Caco-2 (cell line): ENCODE measurements at regions of chr12 and their contacts with region 1.

Region 1: DNA sequence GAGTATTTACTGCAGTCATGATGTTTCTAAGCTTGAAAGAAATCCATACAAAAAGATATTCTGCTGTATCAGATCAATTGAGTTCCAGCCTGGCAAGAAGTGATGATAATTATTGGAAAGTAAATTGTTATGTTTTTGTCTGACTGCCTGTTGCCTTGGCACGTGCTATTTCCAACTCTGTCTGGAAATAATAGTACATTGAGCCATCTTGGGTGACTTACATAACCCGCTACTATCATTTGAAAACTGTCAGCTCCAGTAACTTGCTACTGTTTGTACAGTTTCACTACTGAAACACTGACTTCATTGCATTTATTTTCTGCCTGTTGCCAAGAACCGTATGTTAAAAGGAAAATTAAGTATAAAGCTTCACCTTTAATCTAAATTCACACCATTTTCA is 318.6 kb downstream of the ITPR2 start:
- DNase-seq: no peak
- H3K4me3 ChIP-seq: no peak overlapping the region
- H3K4me3 Mint-ChIP-seq: no peak overlapping the region
- H3K27ac Mint-ChIP-seq: peak overlapping the region; percentile 96
- H3K4me1 ChIP-seq: peaks cover 51% of the 10 kb centered on the region
- H3K4me1 Mint-ChIP-seq: peaks cover 44% of the 10 kb centered on the region
- H3K27me3 ChIP-seq: no peaks in the 10 kb centered on the region
- H3K27me3 Mint-ChIP-seq: no peaks in the 10 kb centered on the region
- CTCF ChIP-seq: no peak

Region 2: GRCh38 chr12:26091822-26092221 is 422.5 kb before region 1 on chr12:
- CTCF ChIA-PET with region 1: no interaction called
- POLR2A ChIA-PET with region 1: interaction called, 3 read pairs
- intact Hi-C with region 1: loop called (anchors 1 kb)
- DNase-seq: peak in 1 of 2 experiments; percentile 42
- H3K4me3 ChIP-seq: no peak overlapping the region
- H3K4me3 Mint-ChIP-seq: peak overlapping the region; percentile 7
- H3K27ac Mint-ChIP-seq: peak overlapping the region; percentile 84
- H3K4me1 ChIP-seq: peaks cover 61% of the 10 kb centered on the region
- H3K4me1 Mint-ChIP-seq: peaks cover 45% of the 10 kb centered on the region
- H3K27me3 ChIP-seq: no peaks in the 10 kb centered on the region
- H3K27me3 Mint-ChIP-seq: no peaks in the 10 kb centered on the region
- CTCF ChIP-seq: peak; percentile 30 to 34

Region 3: GRCh38 chr12:26113853-26114719 is 400.3 kb before region 1 on chr12:
- CTCF ChIA-PET with region 1: no interaction called
- POLR2A ChIA-PET with region 1: no interaction called
- intact Hi-C with region 1: loop called (anchors 1 kb)
- DNase-seq: peak; percentile 98
- H3K4me3 ChIP-seq: peak overlapping the region; percentile 77
- H3K4me3 Mint-ChIP-seq: peak overlapping the region; percentile 78
- H3K27ac Mint-ChIP-seq: peak overlapping the region; percentile 90
- H3K4me1 ChIP-seq: peaks cover 23% of the 10 kb centered on the region
- H3K4me1 Mint-ChIP-seq: peaks cover 18% of the 10 kb centered on the region
- H3K27me3 ChIP-seq: no peaks in the 10 kb centered on the region
- H3K27me3 Mint-ChIP-seq: peaks cover 2% of the 10 kb centered on the region
- CTCF ChIP-seq: peak; percentile 12 to 48

Region 4: DNA sequence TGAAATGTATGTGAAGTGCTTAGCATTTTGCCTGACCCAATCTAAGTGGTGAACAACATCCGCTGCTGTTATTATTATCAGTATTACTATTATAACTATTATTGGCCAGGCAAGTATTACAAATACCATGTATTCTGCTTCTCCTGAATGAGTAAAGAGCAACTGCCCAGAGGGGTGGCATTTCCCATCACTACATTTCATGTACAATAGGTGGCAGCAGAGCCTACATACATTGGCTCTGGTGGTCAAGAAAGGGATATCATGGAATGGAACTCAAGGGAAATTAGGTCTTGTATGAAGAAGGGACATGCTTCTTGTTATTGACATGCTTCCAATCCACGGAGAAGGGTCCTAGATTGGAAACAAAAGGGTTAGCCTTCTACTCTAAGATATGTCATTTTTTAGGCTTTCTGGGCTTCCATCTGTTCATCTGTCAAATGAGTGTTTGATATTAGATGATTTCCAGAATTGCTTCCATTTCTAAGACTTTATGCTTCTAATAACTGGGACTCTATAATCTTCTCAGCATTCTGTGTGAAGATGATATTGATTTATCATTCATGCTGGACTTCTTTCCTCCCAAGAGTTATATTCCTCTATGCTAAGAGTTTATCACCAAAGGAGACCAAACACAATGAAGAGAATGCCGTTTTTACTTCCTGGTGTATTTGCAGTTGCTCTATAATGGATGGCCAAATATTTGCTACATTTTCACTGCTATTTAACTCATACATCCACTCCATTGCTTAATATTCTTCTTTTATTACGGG is 79.9 kb before region 1 on chr12:
- CTCF ChIA-PET with region 1: interaction called, 5 read pairs
- POLR2A ChIA-PET with region 1: no interaction called
- intact Hi-C with region 1: loop called (anchors 1 kb)
- DNase-seq: peak; percentile 72 to 77
- H3K4me3 ChIP-seq: no peak overlapping the region
- H3K4me3 Mint-ChIP-seq: peak overlapping the region; percentile 16
- H3K27ac Mint-ChIP-seq: peak overlapping the region; percentile 45
- H3K4me1 ChIP-seq: peaks cover 27% of the 10 kb centered on the region
- H3K4me1 Mint-ChIP-seq: peaks cover 17% of the 10 kb centered on the region
- H3K27me3 ChIP-seq: no peaks in the 10 kb centered on the region
- H3K27me3 Mint-ChIP-seq: no peaks in the 10 kb centered on the region
- CTCF ChIP-seq: peak; percentile 89 to 97

Region 5: GRCh38 chr12:26629864-26630263 is 115.5 kb after region 1 on chr12:
- CTCF ChIA-PET with region 1: no interaction called
- POLR2A ChIA-PET with region 1: no interaction called
- intact Hi-C with region 1: loop called (anchors 1 kb)
- DNase-seq: no peak
- H3K4me3 ChIP-seq: no peak overlapping the region
- H3K4me3 Mint-ChIP-seq: peak overlapping the region; percentile 14
- H3K27ac Mint-ChIP-seq: peak overlapping the region; percentile 51
- H3K4me1 ChIP-seq: peaks cover 57% of the 10 kb centered on the region
- H3K4me1 Mint-ChIP-seq: peaks cover 55% of the 10 kb centered on the region
- H3K27me3 ChIP-seq: no peaks in the 10 kb centered on the region
- H3K27me3 Mint-ChIP-seq: no peaks in the 10 kb centered on the region
- CTCF ChIP-seq: peak in 1 of 2 experiments; percentile 11

Region 6: GRCh38 chr12:26791301-26791791 is 277.0 kb after region 1 on chr12:
- CTCF ChIA-PET with region 1: no interaction called
- POLR2A ChIA-PET with region 1: no interaction called
- intact Hi-C with region 1: no loop called
- DNase-seq: no peak
- H3K4me3 ChIP-seq: no peak overlapping the region
- H3K4me3 Mint-ChIP-seq: no peak overlapping the region
- H3K27ac Mint-ChIP-seq: no peak overlapping the region
- H3K4me1 ChIP-seq: no peaks in the 10 kb centered on the region
- H3K4me1 Mint-ChIP-seq: peaks cover 7% of the 10 kb centered on the region
- H3K27me3 ChIP-seq: no peaks in the 10 kb centered on the region
- H3K27me3 Mint-ChIP-seq: no peaks in the 10 kb centered on the region
- CTCF ChIP-seq: no peak

Region 7: GRCh38 chr12:26937875-26938700 is 423.7 kb after region 1 on chr12 and contains the starts of genes FGFR1OP2 and INTS13:
- CTCF ChIA-PET with region 1: no interaction called
- POLR2A ChIA-PET with region 1: no interaction called
- intact Hi-C with region 1: loop called (anchors 5 kb)
- DNase-seq: peak; percentile 100
- H3K4me3 ChIP-seq: peak within 1 kb of the TSS; percentile 96
- H3K4me3 Mint-ChIP-seq: peak within 1 kb of the TSS; percentile 95
- H3K27ac Mint-ChIP-seq: peak within 1 kb of the TSS; percentile 91
- H3K4me1 ChIP-seq: peaks cover 22% of the 10 kb centered on the region
- H3K4me1 Mint-ChIP-seq: peaks cover 30% of the 10 kb centered on the region
- H3K27me3 ChIP-seq: no peaks in the 10 kb centered on the region
- H3K27me3 Mint-ChIP-seq: no peaks in the 10 kb centered on the region
- CTCF ChIP-seq: no peak
- total RNA-seq, gene FGFR1OP2: 77.9 and 86.9 TPM in 2 replicates
- total RNA-seq, gene INTS13: 40.1 and 41.5 TPM in 2 replicates